GM12878 (cell line): ENCODE measurements at regions of chr9 and their contacts with region 1.

Region 1: DNA sequence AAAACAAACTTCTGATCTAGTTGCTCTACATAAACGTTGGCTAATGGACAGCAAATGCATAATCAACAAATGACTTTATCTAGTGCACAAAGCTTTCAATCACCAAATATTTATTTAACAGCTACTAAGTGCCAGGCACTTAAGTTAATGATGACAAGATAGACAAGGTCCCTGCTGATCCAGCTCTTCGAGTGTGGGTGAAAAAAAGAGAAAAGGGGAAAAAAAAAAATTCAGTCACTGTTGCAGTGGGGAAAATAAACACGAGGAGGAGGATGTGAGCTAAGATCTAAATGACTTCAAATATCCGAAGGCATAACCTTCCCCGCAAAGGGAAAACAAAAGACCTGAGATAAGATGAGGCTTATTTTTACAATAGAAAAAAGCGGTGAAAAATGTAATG is 9.6 kb downstream of the PSIP1 start:
- DNase-seq: no peak
- ATAC-seq: no peak
- H3K4me3 ChIP-seq: no peak overlapping the region
- H3K27ac ChIP-seq: no peak overlapping the region
- H3K4me1 ChIP-seq: no peaks in the 10 kb centered on the region
- H3K27me3 ChIP-seq: no peaks in the 10 kb centered on the region
- CTCF ChIP-seq: no peak
- EP300 ChIP-seq: no peak
- POLR2A ChIP-seq: no peak
- RAD21 ChIP-seq: no peak

Region 2: GRCh38 chr9:15461601-15462000 is 39.6 kb before region 1 on chr9:
- CTCF ChIA-PET with region 1: interaction called, 5 read pairs
- POLR2A ChIA-PET with region 1: no interaction called
- RAD21 ChIA-PET with region 1: no interaction called
- SMC1A ChIA-PET with region 1: interaction called, 10 read pairs
- in situ Hi-C with region 1: no loop called
- intact Hi-C with region 1: no loop called
- DNase-seq: no peak
- ATAC-seq: no peak
- H3K4me3 ChIP-seq: no peak overlapping the region
- H3K27ac ChIP-seq: no peak overlapping the region
- H3K4me1 ChIP-seq: no peaks in the 10 kb centered on the region
- H3K27me3 ChIP-seq: no peaks in the 10 kb centered on the region
- CTCF ChIP-seq: no peak
- EP300 ChIP-seq: no peak
- POLR2A ChIP-seq: no peak
- RAD21 ChIP-seq: no peak

Region 3: DNA sequence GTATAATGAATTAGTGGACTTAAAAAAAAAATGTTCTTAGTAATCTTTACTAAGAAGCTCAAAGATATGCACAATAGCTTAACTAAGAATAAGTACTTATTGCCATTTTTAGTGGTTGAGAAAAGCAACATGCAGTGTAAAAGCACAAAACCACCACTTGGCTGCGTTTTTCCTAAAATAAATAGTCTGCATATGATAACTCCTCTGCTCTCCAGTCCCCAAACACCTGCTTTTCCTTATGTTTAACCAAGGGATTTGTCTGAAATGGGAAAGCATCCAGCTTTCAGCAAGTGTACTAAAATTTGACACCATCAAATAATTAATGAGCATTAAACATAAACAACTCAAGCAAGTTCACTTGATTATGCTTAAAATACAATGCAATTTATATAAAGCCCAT is 31.8 kb before region 1 on chr9:
- CTCF ChIA-PET with region 1: interaction called, 5 read pairs
- POLR2A ChIA-PET with region 1: no interaction called
- RAD21 ChIA-PET with region 1: no interaction called
- SMC1A ChIA-PET with region 1: interaction called, 15 read pairs
- in situ Hi-C with region 1: no loop called
- intact Hi-C with region 1: no loop called
- DNase-seq: no peak
- ATAC-seq: no peak
- H3K4me3 ChIP-seq: no peak overlapping the region
- H3K27ac ChIP-seq: no peak overlapping the region
- H3K4me1 ChIP-seq: no peaks in the 10 kb centered on the region
- H3K27me3 ChIP-seq: no peaks in the 10 kb centered on the region
- CTCF ChIP-seq: no peak
- EP300 ChIP-seq: no peak
- POLR2A ChIP-seq: no peak
- RAD21 ChIP-seq: no peak

Region 4: DNA sequence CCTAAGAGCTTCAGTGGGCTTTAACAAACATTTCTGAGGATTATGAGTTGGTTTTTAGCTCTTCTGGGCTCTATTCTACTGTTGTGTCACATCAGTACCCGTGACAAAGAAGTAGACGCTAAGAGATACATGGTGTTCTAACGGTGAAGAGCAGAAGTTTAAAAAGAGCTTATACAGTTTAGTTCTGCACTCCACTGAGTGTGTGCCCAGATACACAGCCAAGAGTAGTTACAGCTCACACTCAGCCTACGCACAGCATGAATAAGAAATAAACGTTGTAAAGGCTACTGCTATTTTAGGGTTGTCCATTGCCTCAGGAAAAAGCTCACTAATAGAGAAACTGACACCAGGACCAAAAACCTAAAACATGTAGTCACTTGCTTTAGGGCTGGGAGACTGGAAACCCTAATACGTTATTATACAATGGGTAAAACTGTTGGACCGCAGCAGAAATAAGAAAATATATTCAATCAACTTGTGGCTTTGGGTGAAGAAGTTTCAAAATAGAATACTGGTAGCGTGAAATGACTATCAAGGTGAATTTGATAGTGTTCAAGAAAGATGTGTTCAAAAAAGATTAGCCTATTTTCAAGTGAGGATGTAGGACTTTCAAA is 25.1 kb before region 1 on chr9:
- CTCF ChIA-PET with region 1: interaction called, 9 read pairs
- POLR2A ChIA-PET with region 1: no interaction called
- RAD21 ChIA-PET with region 1: interaction called, 7 read pairs
- SMC1A ChIA-PET with region 1: interaction called, 15 read pairs
- in situ Hi-C with region 1: no loop called
- intact Hi-C with region 1: loop called (anchors 2 kb)
- DNase-seq: peak; percentile 20
- ATAC-seq: peak; percentile 70
- H3K4me3 ChIP-seq: no peak overlapping the region
- H3K27ac ChIP-seq: no peak overlapping the region
- H3K4me1 ChIP-seq: peaks cover 3% of the 10 kb centered on the region; the same call in 1 of the 2 replicates
- H3K27me3 ChIP-seq: no peaks in the 10 kb centered on the region
- CTCF ChIP-seq: no peak
- EP300 ChIP-seq: peak in 1 of 2 experiments; percentile 27; a peak in 1 of 4 replicates
- POLR2A ChIP-seq: no peak
- RAD21 ChIP-seq: no peak

Region 5: GRCh38 chr9:15485836-15486666 is 15.1 kb before region 1 on chr9:
- CTCF ChIA-PET with region 1: interaction called, 8 read pairs
- POLR2A ChIA-PET with region 1: interaction called, 3 read pairs
- RAD21 ChIA-PET with region 1: interaction called, 7 read pairs
- SMC1A ChIA-PET with region 1: interaction called, 12 read pairs
- in situ Hi-C with region 1: no loop called
- intact Hi-C with region 1: no loop called
- DNase-seq: no peak
- ATAC-seq: peak; percentile 58
- H3K4me3 ChIP-seq: no peak overlapping the region
- H3K27ac ChIP-seq: no peak overlapping the region
- H3K4me1 ChIP-seq: no peaks in the 10 kb centered on the region
- H3K27me3 ChIP-seq: no peaks in the 10 kb centered on the region
- CTCF ChIP-seq: peak; percentile 31 to 46 (median 36); a peak in 5 of 6 replicates
- EP300 ChIP-seq: no peak
- POLR2A ChIP-seq: no peak
- RAD21 ChIP-seq: 0 out of 2 replicates have a peak, but pooled peaks have one; percentile 26

Region 6: GRCh38 chr9:15552636-15553527 is 51.7 kb after region 1 on chr9 and contains the start of gene CCDC171:
- CTCF ChIA-PET with region 1: interaction called, 14 read pairs
- POLR2A ChIA-PET with region 1: interaction called, 3 read pairs
- RAD21 ChIA-PET with region 1: interaction called, 5 read pairs
- SMC1A ChIA-PET with region 1: interaction called, 6 read pairs
- in situ Hi-C with region 1: no loop called
- intact Hi-C with region 1: loop called (anchors 2 kb)
- DNase-seq: peak; percentile 75
- ATAC-seq: peak; percentile 88
- H3K4me3 ChIP-seq: peak within 1 kb of the TSS; percentile 95
- H3K27ac ChIP-seq: peak within 1 kb of the TSS; percentile 80
- H3K4me1 ChIP-seq: peaks cover 8% of the 10 kb centered on the region
- H3K27me3 ChIP-seq: no peaks in the 10 kb centered on the region
- CTCF ChIP-seq: no peak
- EP300 ChIP-seq: no peak; a peak in 1 of 4 replicates
- POLR2A ChIP-seq: peak; percentile 74
- RAD21 ChIP-seq: no peak
- polyA plus RNA-seq, gene CCDC171: 1.00 to 1.1 TPM

Region 7: GRCh38 chr9:15755660-15756059 is 254.5 kb after region 1 on chr9:
- CTCF ChIA-PET with region 1: no interaction called
- POLR2A ChIA-PET with region 1: no interaction called
- RAD21 ChIA-PET with region 1: no interaction called
- SMC1A ChIA-PET with region 1: no interaction called
- in situ Hi-C with region 1: no loop called
- intact Hi-C with region 1: no loop called
- DNase-seq: no peak
- ATAC-seq: no peak
- H3K4me3 ChIP-seq: no peak overlapping the region
- H3K27ac ChIP-seq: no peak overlapping the region
- H3K4me1 ChIP-seq: no peaks in the 10 kb centered on the region
- H3K27me3 ChIP-seq: no peaks in the 10 kb centered on the region
- CTCF ChIP-seq: no peak
- EP300 ChIP-seq: no peak
- POLR2A ChIP-seq: no peak
- RAD21 ChIP-seq: no peak